ENCODE measurements at regions of chr14 and their contacts with region 1.

Region 1: DNA sequence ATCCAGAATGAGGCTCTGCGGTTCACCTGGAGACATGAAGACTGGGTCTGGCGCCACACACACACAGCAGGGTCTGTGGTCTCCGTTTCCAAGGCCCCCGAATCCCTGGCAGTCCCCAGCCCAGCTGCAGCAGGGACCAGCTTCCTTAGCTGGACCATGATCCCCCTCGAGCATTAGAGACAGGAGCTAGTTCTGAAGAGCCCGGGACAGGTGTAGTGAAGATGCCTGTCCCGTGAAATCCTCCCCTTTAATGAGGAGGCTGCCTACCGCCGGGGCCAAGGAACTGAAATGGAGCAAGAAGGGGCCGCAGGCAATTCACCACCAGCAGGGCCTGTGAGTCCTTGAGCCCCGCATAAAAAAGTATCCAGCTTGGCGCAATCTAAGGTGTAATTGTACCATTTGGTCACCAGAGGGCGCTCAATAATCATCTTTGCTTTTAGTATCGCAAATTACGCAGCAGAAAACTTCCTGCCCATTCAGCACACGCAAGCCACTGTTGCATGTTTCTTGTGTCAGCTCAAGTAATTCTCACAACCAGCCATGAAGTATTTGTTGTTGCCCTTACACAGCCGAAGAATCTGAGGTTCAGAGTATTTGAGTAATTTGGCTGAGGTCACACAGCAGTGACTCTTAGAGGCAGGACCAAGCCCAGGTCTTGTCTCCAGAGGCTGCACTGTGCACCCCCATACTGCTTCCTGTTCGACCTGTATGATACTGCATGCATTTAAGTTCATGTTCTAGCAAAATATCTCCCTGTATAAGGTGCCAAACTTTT is 54.3 kb upstream of the PPP2R5C start:
- DNase-seq: peak; percentile 30
- ATAC-seq: peak; percentile 70
- H3K4me3 Mint-ChIP-seq: peak overlapping the region; percentile 46
- H3K27ac Mint-ChIP-seq: peak overlapping the region; percentile 31
- H3K4me1 Mint-ChIP-seq: peaks cover 22% of the 10 kb centered on the region
- H3K27me3 Mint-ChIP-seq: peaks cover 3% of the 10 kb centered on the region
- CTCF ChIP-seq: peak; percentile 65

Region 2: GRCh38 chr14:101761032-101761880 is 54.0 kb after region 1 on chr14 and contains the start of gene PPP2R5C:
- CTCF ChIA-PET with region 1: interaction called, 5 read pairs
- POLR2A ChIA-PET with region 1: interaction called, 3 read pairs
- intact Hi-C with region 1: loop called (anchors 1 kb)
- DNase-seq: peak; percentile 81
- ATAC-seq: peak; percentile 63
- H3K4me3 Mint-ChIP-seq: peak within 1 kb of the TSS; percentile 88
- H3K27ac Mint-ChIP-seq: peak within 1 kb of the TSS; percentile 77
- H3K4me1 Mint-ChIP-seq: peaks cover 18% of the 10 kb centered on the region
- H3K27me3 Mint-ChIP-seq: no peaks in the 10 kb centered on the region
- CTCF ChIP-seq: no peak
- total RNA-seq, gene PPP2R5C: 197 and 227 TPM in 2 replicates

Region 3: GRCh38 chr14:101843665-101844064 is 136.4 kb after region 1 on chr14:
- CTCF ChIA-PET with region 1: interaction called, 9 read pairs
- POLR2A ChIA-PET with region 1: interaction called, 16 read pairs
- intact Hi-C with region 1: loop called (anchors 1 kb)
- DNase-seq: peak; percentile 48
- ATAC-seq: peak; percentile 79
- H3K4me3 Mint-ChIP-seq: peak overlapping the region; percentile 76
- H3K27ac Mint-ChIP-seq: peak overlapping the region; percentile 94
- H3K4me1 Mint-ChIP-seq: peaks cover 83% of the 10 kb centered on the region
- H3K27me3 Mint-ChIP-seq: no peaks in the 10 kb centered on the region
- CTCF ChIP-seq: peak; percentile 26

Region 4: DNA sequence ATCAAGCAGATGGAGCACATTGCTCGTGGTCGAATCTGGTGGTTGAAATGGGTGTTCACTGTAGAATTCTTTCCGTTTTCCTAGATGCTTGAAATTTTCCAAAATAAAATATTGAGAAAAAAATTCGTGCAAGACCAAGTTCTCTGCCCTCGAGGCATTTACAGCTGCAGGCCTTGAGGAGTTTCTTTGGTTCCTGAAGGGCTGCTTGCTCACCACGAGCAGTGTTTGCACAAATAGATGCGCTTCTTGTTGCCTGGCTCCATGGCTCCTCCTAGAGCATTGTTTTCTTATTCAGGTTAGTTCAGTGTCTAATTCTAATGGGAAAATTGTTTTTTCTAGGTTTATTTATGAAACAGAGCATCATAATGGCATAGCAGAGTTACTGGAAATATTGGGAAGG is 182.6 kb after region 1 on chr14:
- CTCF ChIA-PET with region 1: no interaction called
- POLR2A ChIA-PET with region 1: no interaction called
- intact Hi-C with region 1: loop called (anchors 2 kb)
- DNase-seq: no peak
- ATAC-seq: no peak
- H3K4me3 Mint-ChIP-seq: no peak overlapping the region
- H3K27ac Mint-ChIP-seq: peak overlapping the region; percentile 35
- H3K4me1 Mint-ChIP-seq: no peaks in the 10 kb centered on the region
- H3K27me3 Mint-ChIP-seq: no peaks in the 10 kb centered on the region
- CTCF ChIP-seq: no peak

Region 5: GRCh38 chr14:101947906-101948665 is 240.8 kb after region 1 on chr14:
- CTCF ChIA-PET with region 1: interaction called, 3 read pairs
- POLR2A ChIA-PET with region 1: interaction called, 18 read pairs
- intact Hi-C with region 1: loop called (anchors 1 kb)
- DNase-seq: peak; percentile 98
- ATAC-seq: peak; percentile 95
- H3K4me3 Mint-ChIP-seq: peak overlapping the region; percentile 93
- H3K27ac Mint-ChIP-seq: peak overlapping the region; percentile 97
- H3K4me1 Mint-ChIP-seq: peaks cover 19% of the 10 kb centered on the region
- H3K27me3 Mint-ChIP-seq: peaks cover 22% of the 10 kb centered on the region
- CTCF ChIP-seq: no peak

Region 6: DNA sequence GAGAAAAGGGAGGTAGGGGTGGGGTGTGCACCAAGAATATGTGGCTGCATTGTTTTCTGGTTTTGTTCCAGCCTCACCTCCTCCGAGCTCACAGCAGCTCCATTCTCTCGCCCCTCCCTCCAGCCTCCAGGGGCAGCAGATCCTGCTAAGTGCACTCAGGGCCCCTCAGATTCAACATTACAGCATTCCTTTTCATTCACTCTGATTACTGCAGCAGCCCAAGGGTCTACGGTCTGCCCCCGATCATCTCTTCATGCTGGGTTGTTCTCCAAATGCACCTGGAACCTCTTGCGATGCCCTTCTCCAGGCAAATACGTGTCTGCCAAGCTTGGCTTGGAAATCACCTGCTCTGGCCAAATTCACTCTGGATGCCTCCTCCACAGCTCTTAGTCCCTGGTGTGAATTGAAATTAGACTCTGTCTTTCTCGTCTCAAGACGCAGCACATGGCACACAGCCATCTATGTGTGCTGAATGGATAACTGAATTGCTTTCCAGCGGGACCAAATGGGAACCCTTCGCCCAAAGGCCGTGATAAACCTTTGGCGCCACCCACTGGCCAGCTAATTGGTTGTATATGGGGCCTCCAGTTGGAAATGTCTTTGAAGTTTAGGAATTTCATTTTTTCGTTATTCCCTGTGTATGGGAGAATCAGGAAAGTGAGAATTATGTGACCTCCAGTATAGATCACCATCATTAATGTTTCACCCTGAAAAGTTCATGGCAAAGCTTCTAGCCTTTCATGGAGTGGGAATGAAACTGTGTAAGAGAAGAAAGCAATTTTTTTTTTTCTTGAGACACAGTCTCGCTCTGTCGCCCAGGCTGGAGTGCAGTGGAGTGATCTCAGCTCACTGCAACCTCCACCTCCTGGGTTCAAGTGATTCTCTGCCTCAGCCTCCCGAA is 389.2 kb after region 1 on chr14:
- CTCF ChIA-PET with region 1: interaction called, 20 read pairs
- POLR2A ChIA-PET with region 1: interaction called, 5 read pairs
- intact Hi-C with region 1: loop called (anchors 1 kb)
- DNase-seq: peak; percentile 46
- ATAC-seq: peak; percentile 56
- H3K4me3 Mint-ChIP-seq: no peak overlapping the region
- H3K27ac Mint-ChIP-seq: no peak overlapping the region
- H3K4me1 Mint-ChIP-seq: peaks cover 4% of the 10 kb centered on the region
- H3K27me3 Mint-ChIP-seq: no peaks in the 10 kb centered on the region
- CTCF ChIP-seq: no peak